Activated T-helper 1 cell treated with anti-CD3 and anti-CD28 coated beads, Interleukin-12 subunit alpha, Interleukin-12 subunit beta, Interleukin-2, Interleukin-4 antibody, amounts not matched to agents 30 ng/mL and 10 ng/mL and 1 ng/mL, durations not matched to agents 14 hours and 24 hours and 36 hours (primary cell): ENCODE measurements at regions of chr6 and their contacts with region 1.

Region 1: GRCh38 chr6:25829375-25829774 is 2.5 kb downstream of the SLC17A1 start:
- DNase-seq: no peak
- H3K4me3 Mint-ChIP-seq: no peak overlapping the region
- H3K27ac Mint-ChIP-seq: no peak overlapping the region
- H3K4me1 Mint-ChIP-seq: peaks cover 11% of the 10 kb centered on the region
- H3K27me3 Mint-ChIP-seq: peaks cover 5% of the 10 kb centered on the region

Region 2: DNA sequence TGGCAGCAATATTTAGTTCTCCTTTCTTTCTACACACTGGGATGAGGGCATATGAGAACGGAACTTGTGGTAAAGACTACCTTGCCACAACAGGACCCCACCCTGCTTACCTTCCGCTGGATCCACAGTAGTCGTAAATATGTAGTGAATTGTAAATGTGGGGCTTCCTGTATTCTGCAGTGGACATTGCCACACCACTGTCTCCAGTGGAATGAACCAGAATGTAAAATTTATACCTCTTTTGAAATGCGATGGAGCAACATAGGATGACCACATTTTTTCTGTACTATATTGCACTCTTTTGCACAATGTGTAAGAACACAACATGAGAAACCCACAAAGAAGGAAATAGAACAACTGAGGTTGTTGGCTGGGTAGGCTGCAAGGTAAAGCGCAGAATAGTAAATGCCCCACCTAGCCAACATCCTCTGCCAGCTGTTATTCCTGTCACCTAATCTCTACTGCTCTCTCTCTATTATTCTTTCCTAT is 877.5 kb before region 1 on chr6:
- intact Hi-C with region 1: no loop called
- DNase-seq: peak; percentile 57
- H3K4me3 Mint-ChIP-seq: peak overlapping the region; percentile 64
- H3K27ac Mint-ChIP-seq: peak overlapping the region; percentile 77
- H3K4me1 Mint-ChIP-seq: peaks cover 94% of the 10 kb centered on the region
- H3K27me3 Mint-ChIP-seq: no peaks in the 10 kb centered on the region

Region 3: DNA sequence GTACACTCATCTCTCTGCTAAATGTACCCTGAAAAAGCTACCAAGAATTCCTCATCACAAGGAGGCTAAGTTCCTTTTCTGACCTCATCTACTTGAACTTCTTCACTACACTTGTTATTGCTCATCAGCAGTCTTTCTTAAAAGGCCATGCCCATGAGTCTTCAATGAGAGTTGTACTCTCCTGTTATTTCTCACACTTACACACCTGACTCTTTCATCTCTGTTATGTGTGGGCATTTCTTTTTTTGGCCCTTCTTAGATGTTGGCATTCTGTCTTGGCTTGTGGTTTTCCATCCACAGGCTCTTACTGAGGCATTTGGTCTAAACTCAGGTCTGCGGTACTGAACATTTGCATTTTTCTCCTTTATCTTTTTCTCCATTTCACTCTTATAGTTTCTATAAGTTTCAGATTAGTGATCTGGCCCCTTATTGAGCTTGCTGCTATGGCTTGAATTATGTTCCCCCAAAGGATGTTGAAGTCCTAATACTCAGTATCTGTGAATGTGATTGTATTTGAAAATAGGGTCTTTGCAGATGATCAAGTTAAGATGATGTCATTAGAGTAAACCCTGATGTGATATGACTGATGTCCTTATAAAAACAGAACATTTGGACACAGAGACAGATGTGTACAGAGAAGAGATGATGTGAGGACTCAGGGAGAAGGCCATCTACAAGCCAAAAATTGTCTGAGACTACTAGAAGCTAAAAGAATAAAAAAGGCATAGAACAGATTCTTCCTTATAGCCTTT is 13.3 kb after region 1 on chr6:
- intact Hi-C with region 1: loop called (anchors 1 kb)
- DNase-seq: no peak
- H3K4me3 Mint-ChIP-seq: no peak overlapping the region
- H3K27ac Mint-ChIP-seq: no peak overlapping the region
- H3K4me1 Mint-ChIP-seq: no peaks in the 10 kb centered on the region
- H3K27me3 Mint-ChIP-seq: peaks cover 2% of the 10 kb centered on the region

Region 4: DNA sequence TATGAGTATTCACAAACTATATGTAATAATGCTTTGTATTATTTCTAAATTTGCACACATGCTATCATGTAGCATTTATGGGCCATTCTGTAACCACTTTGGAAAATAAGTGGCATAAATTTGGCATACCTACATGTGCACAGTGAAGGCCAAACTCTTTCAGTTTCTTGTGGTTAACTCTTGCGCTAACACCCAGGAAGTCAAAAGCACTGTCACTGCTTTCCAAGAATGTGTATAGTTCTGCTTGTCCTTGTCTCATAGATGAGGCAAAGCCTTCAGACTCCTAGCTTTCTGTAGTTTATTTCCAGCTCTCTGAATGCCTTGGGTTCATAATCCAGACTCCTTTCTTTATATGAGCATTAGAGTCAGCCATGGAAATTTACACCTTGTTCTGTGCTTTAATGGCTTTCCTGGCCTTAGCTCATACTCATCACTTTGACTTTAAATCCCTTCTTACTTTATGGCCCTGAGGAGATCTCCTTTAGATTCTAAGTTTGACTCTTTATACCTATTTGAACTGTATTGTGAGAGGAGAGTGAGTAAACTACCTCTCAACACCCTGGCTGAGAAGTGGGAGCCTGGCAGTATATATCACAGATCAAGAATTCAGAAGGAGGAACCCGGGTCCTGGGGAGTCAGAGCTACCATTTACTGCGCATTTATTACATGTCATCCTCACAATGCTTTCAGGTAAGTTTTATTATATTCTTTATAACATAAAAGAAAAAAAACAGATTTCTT is 45.6 kb after region 1 on chr6:
- intact Hi-C with region 1: loop called (anchors 10 kb)
- DNase-seq: no peak
- H3K4me3 Mint-ChIP-seq: peak overlapping the region; percentile 6
- H3K27ac Mint-ChIP-seq: no peak overlapping the region
- H3K4me1 Mint-ChIP-seq: peaks cover 43% of the 10 kb centered on the region
- H3K27me3 Mint-ChIP-seq: peaks cover 6% of the 10 kb centered on the region